ENCODE measurements at regions of chr12 and their contacts with region 1.

Region 1: DNA sequence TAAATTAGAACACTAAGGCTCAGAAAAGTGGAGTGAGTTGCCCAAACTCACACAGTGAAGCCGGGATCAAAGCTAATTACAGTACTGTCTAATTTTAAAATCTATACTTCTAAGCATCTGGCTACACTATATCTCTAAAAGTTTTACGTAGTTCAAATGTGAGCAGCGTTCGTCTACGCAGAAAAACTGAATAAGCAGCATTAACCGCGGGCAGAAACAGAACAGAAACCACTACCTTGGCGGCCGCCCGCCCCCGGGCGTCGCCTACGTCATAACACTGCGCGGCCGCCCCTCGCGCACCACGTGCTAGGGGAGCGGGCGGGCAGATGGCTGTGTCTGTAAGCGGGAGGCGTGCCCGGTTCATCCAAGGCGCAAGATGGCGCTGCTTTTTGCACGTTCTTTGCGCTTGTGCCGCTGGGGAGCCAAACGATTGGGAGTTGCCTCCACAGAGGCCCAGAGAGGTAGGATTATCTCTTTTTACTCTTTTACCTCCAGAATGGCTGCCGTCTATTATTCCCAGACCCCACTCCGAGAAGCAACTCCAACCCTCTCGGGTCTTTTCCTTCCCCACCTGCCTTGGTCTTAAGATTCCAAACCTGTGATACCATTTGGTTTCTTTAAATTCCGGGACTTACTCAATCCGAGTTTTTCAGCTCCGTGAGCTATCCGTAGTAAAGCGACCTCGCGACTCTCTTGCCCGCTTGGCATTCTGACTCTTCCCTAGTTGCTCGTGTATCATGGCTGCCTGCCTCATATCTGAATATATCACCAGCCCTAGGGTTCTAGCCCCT is at the start of gene SPRYD4:
- DNase-seq: peak; percentile 92 to 96
- ATAC-seq: peak; percentile 94 to 96
- H3K4me3 ChIP-seq: peak within 1 kb of the TSS; percentile 90
- H3K27ac ChIP-seq: peak within 1 kb of the TSS; percentile 89 to 95
- H3K4me1 ChIP-seq: peaks cover 7% of the 10 kb centered on the region; the same call in 2 of the 3 replicates
- CTCF ChIP-seq: peak; percentile 55
- EP300 ChIP-seq: no peak
- POLR2A ChIP-seq: peak; percentile 92
- RAD21 ChIP-seq: 0 out of 5 replicates have a peak, but pooled peaks of 1 of the 2 experiments have one; percentile 19
- polyA plus RNA-seq, gene SPRYD4: 3.5 and 3.8 TPM in 2 replicates

Region 2: GRCh38 chr12:56266693-56267442 is 201.5 kb before region 1 on chr12 and contains the start of gene COQ10A:
- CTCF ChIA-PET with region 1: interaction called, 11 read pairs
- POLR2A ChIA-PET with region 1: no interaction called
- DNase-seq: peak; percentile 94 to 98
- ATAC-seq: peak; percentile 91 to 94
- H3K4me3 ChIP-seq: peak within 1 kb of the TSS; percentile 47
- H3K27ac ChIP-seq: peak within 1 kb of the TSS; percentile 77 to 93
- H3K4me1 ChIP-seq: peaks cover 20% of the 10 kb centered on the region
- CTCF ChIP-seq: peak; percentile 51
- EP300 ChIP-seq: no peak
- POLR2A ChIP-seq: peak; percentile 96
- RAD21 ChIP-seq: peak; percentile 36 to 42; a peak in 3 of 5 replicates
- polyA plus RNA-seq, gene COQ10A: 40.9 and 41.2 TPM in 2 replicates

Region 3: DNA sequence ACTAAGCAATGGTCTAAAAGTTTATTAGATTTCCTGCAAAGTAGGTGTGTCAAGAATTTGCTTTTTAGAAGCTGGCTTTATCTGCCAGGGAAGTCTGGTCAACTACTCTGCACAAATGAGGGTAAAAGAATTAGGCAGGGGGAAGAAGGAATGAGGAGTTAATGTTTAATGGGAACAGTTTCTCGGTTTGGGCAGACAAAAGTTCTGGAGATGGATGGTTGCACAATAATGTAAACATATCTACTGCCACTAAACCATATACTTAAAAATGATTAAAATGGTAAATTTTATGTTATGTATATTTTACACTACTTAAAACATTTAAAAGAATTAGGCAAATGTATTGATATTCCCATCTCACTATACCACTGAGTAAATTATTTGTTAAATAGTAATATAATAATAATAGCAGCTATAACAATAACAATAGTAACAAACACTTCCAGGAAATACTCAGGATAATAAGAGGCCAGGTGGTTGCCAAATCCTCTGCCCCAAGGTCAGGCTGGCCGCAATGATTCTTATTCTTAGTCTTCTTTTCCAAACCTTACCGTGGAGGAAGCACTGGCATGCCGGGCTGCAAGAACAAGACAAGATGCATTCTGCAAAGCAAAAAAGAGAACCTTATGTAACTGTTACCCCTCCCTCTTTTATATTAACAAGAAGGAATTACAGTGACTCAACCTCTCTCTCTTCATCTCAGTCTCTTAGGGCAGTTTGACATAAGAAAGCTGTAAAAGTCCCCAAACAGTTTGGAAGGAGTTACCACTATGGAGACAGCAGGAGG is 182.2 kb before region 1 on chr12:
- CTCF ChIA-PET with region 1: interaction called, 11 read pairs
- POLR2A ChIA-PET with region 1: no interaction called
- DNase-seq: no peak
- ATAC-seq: peak; percentile 37 to 42; a peak in 5 of 6 replicates
- H3K4me3 ChIP-seq: 0 out of 3 replicates have a peak overlapping the region, but pooled peaks have one; percentile 1
- H3K27ac ChIP-seq: peak overlapping the region; percentile 48 to 70; a peak in 4 of 6 replicates
- H3K4me1 ChIP-seq: peaks cover 32% of the 10 kb centered on the region
- CTCF ChIP-seq: no peak
- EP300 ChIP-seq: no peak
- POLR2A ChIP-seq: no peak
- RAD21 ChIP-seq: no peak

Region 4: GRCh38 chr12:56299853-56300643 is 168.4 kb before region 1 on chr12 and contains the start of gene CS:
- CTCF ChIA-PET with region 1: no interaction called
- POLR2A ChIA-PET with region 1: no interaction called
- DNase-seq: peak; percentile 94 to 98
- ATAC-seq: peak; percentile 94 to 97
- H3K4me3 ChIP-seq: peak within 1 kb of the TSS; percentile 69
- H3K27ac ChIP-seq: peak within 1 kb of the TSS; percentile 90 to 91
- H3K4me1 ChIP-seq: peaks cover 23% of the 10 kb centered on the region; the same call in 2 of the 3 replicates
- CTCF ChIP-seq: no peak
- EP300 ChIP-seq: no peak
- POLR2A ChIP-seq: peak; percentile 42
- RAD21 ChIP-seq: no peak
- polyA plus RNA-seq, gene CS: 223 and 263 TPM in 2 replicates

Region 5: GRCh38 chr12:56315622-56316473 is 152.6 kb before region 1 on chr12 and contains the start of gene CNPY2:
- CTCF ChIA-PET with region 1: interaction called, 14 read pairs
- POLR2A ChIA-PET with region 1: interaction called, 12 read pairs
- DNase-seq: peak; percentile 97 to 100
- ATAC-seq: peak; percentile 97
- H3K4me3 ChIP-seq: peak within 1 kb of the TSS; percentile 93
- H3K27ac ChIP-seq: peak within 1 kb of the TSS; percentile 94 to 96
- H3K4me1 ChIP-seq: peaks cover 11% of the 10 kb centered on the region
- CTCF ChIP-seq: no peak
- EP300 ChIP-seq: no peak
- POLR2A ChIP-seq: peak; percentile 88
- RAD21 ChIP-seq: peak; percentile 30 to 54; a peak in 2 of 5 replicates
- polyA plus RNA-seq, gene CNPY2: 218 and 257 TPM in 2 replicates

Region 6: DNA sequence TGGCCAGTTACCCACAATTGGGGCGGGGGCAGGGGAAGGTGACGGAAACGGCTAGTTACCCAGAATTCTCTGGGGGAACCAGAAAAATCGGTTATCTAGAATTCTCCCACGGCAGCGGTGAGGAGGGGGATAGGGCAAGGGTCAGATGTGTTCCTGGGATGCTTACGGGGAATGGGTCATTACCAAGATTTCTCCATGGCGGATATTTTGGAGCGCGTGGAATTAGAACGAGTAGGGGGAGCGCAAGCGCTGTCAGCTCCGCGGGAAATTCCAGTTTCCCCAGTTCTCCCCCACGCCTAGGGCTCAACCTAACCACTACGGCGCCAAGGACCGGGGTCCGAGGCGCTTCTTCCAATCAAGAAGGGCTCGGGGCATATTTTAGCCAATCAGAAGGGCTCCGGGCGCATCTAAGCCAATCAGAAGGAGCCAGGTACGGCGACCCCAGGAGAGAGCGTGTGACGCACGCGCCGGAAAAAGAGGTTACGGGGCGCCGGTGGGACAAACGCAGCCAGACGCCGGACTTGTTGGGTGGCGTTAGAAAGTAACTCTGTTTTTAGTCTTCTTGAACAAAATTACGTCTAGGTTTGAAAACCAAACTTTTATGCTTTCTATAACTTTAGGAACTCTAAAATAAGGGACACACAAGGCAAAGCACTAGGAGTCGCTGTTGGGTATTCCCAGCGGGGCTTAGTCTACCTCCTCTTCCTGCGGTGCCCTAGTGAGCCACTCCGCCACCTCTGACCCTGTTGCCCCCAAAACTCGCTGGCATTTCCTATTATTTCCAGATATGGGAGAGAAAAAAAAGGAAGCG is 134.5 kb before region 1 on chr12 and contains the start of gene PAN2:
- CTCF ChIA-PET with region 1: interaction called, 14 read pairs
- POLR2A ChIA-PET with region 1: interaction called, 4 read pairs
- DNase-seq: peak; percentile 99 to 100
- ATAC-seq: peak; percentile 97 to 100
- H3K4me3 ChIP-seq: peak within 1 kb of the TSS; percentile 54
- H3K27ac ChIP-seq: peak within 1 kb of the TSS; percentile 91 to 92
- H3K4me1 ChIP-seq: peaks cover 15% of the 10 kb centered on the region
- CTCF ChIP-seq: peak; percentile 47
- EP300 ChIP-seq: no peak
- POLR2A ChIP-seq: peak; percentile 61
- RAD21 ChIP-seq: peak; percentile 22 to 25; a peak in 2 of 5 replicates
- polyA plus RNA-seq, gene PAN2: 66.8 and 89.4 TPM in 2 replicates

Region 7: DNA sequence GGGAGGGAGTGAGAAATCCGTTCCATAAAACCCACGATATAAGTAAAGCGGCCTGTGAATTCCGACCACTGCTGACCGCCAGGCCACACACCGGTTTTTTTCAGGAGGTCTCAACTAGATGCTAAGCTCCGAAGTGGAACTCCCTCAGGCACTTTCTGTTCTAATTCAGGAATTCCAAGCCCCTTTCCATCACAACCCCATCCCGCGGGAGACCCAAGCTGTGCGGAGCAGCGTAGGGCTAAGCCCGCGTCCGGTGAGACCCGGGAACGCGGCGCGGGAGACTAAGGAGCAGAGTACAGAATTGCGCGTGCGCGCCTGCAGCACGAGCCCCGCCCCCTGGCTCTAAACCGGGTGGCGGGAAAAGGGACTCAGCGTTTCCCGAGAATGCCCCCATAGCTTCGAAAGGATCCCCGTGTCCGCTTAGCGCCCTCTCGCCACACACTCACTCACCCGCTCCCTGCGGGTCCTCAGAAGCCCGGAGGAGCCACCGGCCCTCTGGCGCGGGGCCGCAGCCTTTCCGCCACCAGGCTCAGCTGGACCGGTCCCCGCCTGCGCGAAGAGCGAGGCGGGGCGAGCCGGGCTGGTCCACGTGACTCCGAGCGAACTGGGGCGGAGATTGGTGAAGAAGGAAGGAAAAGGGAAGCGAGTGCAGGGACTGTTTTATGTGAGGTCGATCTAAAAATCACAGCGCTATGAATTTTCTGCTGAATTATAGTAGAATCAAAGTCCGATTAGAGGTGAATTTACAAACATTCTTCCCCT is 19.4 kb before region 1 on chr12 and contains the start of gene TIMELESS:
- CTCF ChIA-PET with region 1: interaction called, 34 read pairs
- POLR2A ChIA-PET with region 1: interaction called, 4 read pairs
- DNase-seq: peak; percentile 93 to 99
- ATAC-seq: peak; percentile 97 to 98
- H3K4me3 ChIP-seq: peak within 1 kb of the TSS; percentile 59
- H3K27ac ChIP-seq: peak within 1 kb of the TSS; percentile 84 to 92
- H3K4me1 ChIP-seq: peaks cover 9% of the 10 kb centered on the region
- CTCF ChIP-seq: no peak
- EP300 ChIP-seq: no peak
- POLR2A ChIP-seq: peak; percentile 87
- RAD21 ChIP-seq: no peak
- polyA plus RNA-seq, gene TIMELESS: 17.6 and 34.3 TPM in 2 replicates

Region 8: DNA sequence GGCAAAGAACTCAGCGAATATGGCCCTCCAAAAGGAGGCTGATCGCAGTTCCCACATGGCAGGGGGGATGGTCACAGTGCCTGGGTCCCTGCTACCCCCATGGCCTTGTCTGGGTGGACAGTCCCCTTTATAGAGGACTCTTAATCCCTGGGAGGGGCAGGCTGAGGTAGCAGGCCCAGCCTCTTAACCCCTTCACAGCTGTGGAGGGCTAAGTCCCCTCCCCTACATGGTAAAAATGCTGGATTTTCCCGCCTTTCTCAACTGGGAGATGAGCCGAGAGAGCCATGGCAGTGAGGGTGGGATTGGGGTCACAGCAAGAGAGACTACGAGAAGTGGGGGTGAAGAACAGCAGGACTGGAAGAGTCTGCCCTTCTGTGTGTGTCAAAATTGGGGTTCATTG is 13.9 kb before region 1 on chr12 and contains the start of gene MIP:
- CTCF ChIA-PET with region 1: interaction called, 34 read pairs
- POLR2A ChIA-PET with region 1: interaction called, 4 read pairs
- DNase-seq: no peak
- ATAC-seq: no peak
- H3K4me3 ChIP-seq: no peak within 1 kb of the TSS
- H3K27ac ChIP-seq: no peak within 1 kb of the TSS
- H3K4me1 ChIP-seq: peaks cover 4% of the 10 kb centered on the region; the same call in 2 of the 3 replicates
- CTCF ChIP-seq: no peak
- EP300 ChIP-seq: no peak
- POLR2A ChIP-seq: no peak
- RAD21 ChIP-seq: no peak
- polyA plus RNA-seq, gene MIP: 0.03 TPM in 1 of 2 replicates, not detected in the other

Region 9: GRCh38 chr12:56709759-56710376 is 241.5 kb after region 1 on chr12:
- CTCF ChIA-PET with region 1: no interaction called
- POLR2A ChIA-PET with region 1: no interaction called
- DNase-seq: no peak
- ATAC-seq: peak; percentile 37 to 58; a peak in 5 of 6 replicates
- H3K4me3 ChIP-seq: no peak overlapping the region
- H3K27ac ChIP-seq: no peak overlapping the region
- H3K4me1 ChIP-seq: no peaks in the 10 kb centered on the region
- CTCF ChIP-seq: no peak
- EP300 ChIP-seq: no peak
- POLR2A ChIP-seq: no peak
- RAD21 ChIP-seq: no peak